H1 (cell line): ENCODE measurements at regions of chr15 and their contacts with region 1.

Region 1: GRCh38 chr15:77112838-77113504 is 42.1 kb upstream of the TSPAN3 start:
- DNase-seq: peak in 1 of 2 experiments; percentile 36
- H3K4me3 ChIP-seq: no peak overlapping the region
- H3K27ac ChIP-seq: no peak overlapping the region
- H3K4me1 ChIP-seq: no peaks in the 10 kb centered on the region; a peak in 2 of 7 replicates
- H3K27me3 ChIP-seq: no peaks in the 10 kb centered on the region
- CTCF ChIP-seq: peak; percentile 3 to 64 (median 35); a peak in 3 of 4 replicates
- EP300 ChIP-seq: no peak
- POLR2A ChIP-seq: no peak
- RAD21 ChIP-seq: peak; percentile 37 to 52

Region 2: DNA sequence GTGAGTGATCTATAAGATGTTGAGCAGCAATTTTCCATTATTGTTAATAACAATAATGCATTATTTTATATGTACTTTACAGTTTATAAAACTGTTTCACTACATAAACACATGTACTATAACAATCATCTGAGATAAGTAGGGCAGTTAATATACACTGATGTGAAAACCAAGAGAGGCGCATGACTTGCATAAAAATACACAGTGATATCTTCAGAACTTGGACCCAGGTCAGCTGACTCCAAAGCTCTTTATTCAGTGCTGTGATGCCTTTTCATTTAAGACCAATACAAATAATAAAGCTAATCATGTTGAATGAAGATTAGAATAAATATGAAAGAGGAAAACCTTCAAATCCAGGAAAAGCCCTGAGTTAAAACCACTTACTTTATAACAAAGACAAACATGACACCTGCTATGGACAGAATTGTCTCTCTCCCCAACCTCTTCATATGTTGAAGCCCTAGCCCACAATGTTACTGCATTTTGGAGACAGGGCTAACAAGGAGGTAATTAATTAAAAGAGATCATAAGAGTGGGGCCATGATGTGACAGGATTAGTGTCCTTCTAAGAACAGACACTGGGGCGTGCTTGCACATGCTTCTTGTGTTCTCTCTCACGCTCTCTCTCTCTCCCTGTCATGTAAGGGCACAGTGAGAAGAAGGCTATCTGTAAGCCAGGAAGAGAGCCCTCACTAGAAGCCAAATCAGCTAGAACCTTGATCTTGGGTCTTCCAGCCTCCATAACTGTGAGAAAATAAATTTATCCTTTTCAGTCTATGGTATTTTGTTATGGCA is 13.8 kb after region 1 on chr15:
- CTCF ChIA-PET with region 1: interaction called, 48 read pairs
- POLR2A ChIA-PET with region 1: no interaction called
- DNase-seq: no peak
- H3K4me3 ChIP-seq: no peak overlapping the region
- H3K27ac ChIP-seq: no peak overlapping the region
- H3K4me1 ChIP-seq: peaks cover 0 to 12% (median 0%) of the 10 kb centered on the region in 4 experiments; a peak in 1 of 7 replicates
- H3K27me3 ChIP-seq: no peaks in the 10 kb centered on the region
- CTCF ChIP-seq: no peak
- EP300 ChIP-seq: no peak
- POLR2A ChIP-seq: no peak
- RAD21 ChIP-seq: no peak

Region 3: GRCh38 chr15:77181305-77182074 is 68.5 kb after region 1 on chr15:
- CTCF ChIA-PET with region 1: interaction called, 21 read pairs
- POLR2A ChIA-PET with region 1: no interaction called
- DNase-seq: no peak
- H3K4me3 ChIP-seq: no peak overlapping the region
- H3K27ac ChIP-seq: no peak overlapping the region
- H3K4me1 ChIP-seq: no peaks in the 10 kb centered on the region
- H3K27me3 ChIP-seq: no peaks in the 10 kb centered on the region
- CTCF ChIP-seq: no peak
- EP300 ChIP-seq: no peak
- POLR2A ChIP-seq: no peak
- RAD21 ChIP-seq: no peak